ENCODE measurements at regions of chr21 and their contacts with region 1.

Region 1: GRCh38 chr21:42652527-42653230 is 742 bp upstream of the PDE9A start:
- DNase-seq: no peak

Region 2: GRCh38 chr21:42724226-42724920 is 71.7 kb after region 1 on chr21:
- intact Hi-C with region 1: loop called (anchors 10 kb)
- DNase-seq: no peak

Region 3: GRCh38 chr21:42818328-42818749 is 165.7 kb after region 1 on chr21:
- intact Hi-C with region 1: loop called (anchors 5 kb)
- DNase-seq: peak; percentile 86